Activated CD8-positive, alpha-beta T cell treated with anti-CD3 and anti-CD28 coated beads, Interleukin-2, amount 10 ng/mL, durations not matched to agents 7 days and 5 days (primary cell): ENCODE measurements at regions of chr1 and their contacts with region 1.

Region 1: GRCh38 chr1:116485071-116485735 is 85.6 kb downstream of the CD58 start:
- DNase-seq: peak; percentile 91
- ATAC-seq: peak; percentile 96
- H3K4me3 Mint-ChIP-seq: no peak overlapping the region
- H3K27ac Mint-ChIP-seq: no peak overlapping the region
- H3K4me1 Mint-ChIP-seq: peaks cover 4% of the 10 kb centered on the region
- H3K27me3 Mint-ChIP-seq: peaks cover 7% of the 10 kb centered on the region

Region 2: DNA sequence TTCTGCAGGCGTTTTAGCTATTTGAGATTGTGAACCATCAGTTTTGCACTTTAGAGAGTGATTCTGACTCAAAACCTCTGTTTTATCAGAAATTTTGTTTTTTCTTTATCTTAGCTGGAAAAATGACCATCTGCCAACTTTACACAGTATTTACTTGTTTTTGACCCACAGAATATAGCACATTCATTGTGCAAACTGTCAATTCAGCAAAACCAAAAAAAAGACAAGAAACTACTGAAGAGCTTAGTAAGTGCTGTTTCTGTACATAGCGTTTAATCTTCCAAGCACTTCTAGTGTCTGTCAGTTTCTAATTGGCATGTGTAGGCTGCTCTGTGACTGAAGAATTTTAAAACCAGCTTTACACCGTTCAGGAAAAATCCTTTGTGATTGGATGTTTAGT is 919.4 kb before region 1 on chr1:
- CTCF ChIA-PET with region 1: no interaction called
- POLR2A ChIA-PET with region 1: no interaction called
- DNase-seq: no peak
- ATAC-seq: no peak
- H3K4me3 Mint-ChIP-seq: no peak overlapping the region
- H3K27ac Mint-ChIP-seq: no peak overlapping the region
- H3K4me1 Mint-ChIP-seq: no peaks in the 10 kb centered on the region
- H3K27me3 Mint-ChIP-seq: peaks cover 14% of the 10 kb centered on the region

Region 3: GRCh38 chr1:116151739-116152576 is 333.2 kb before region 1 on chr1:
- CTCF ChIA-PET with region 1: interaction called, 429 read pairs
- POLR2A ChIA-PET with region 1: no interaction called
- DNase-seq: peak; percentile 77
- ATAC-seq: peak; percentile 97
- H3K4me3 Mint-ChIP-seq: peak overlapping the region; percentile 60
- H3K27ac Mint-ChIP-seq: peak overlapping the region; percentile 70
- H3K4me1 Mint-ChIP-seq: peaks cover 19% of the 10 kb centered on the region
- H3K27me3 Mint-ChIP-seq: peaks cover 19% of the 10 kb centered on the region

Region 4: GRCh38 chr1:116360429-116361173 is 124.6 kb before region 1 on chr1:
- CTCF ChIA-PET with region 1: interaction called, 28 read pairs
- POLR2A ChIA-PET with region 1: interaction called, 3 read pairs
- DNase-seq: no peak
- ATAC-seq: no peak
- H3K4me3 Mint-ChIP-seq: no peak overlapping the region
- H3K27ac Mint-ChIP-seq: no peak overlapping the region
- H3K4me1 Mint-ChIP-seq: peaks cover 4% of the 10 kb centered on the region
- H3K27me3 Mint-ChIP-seq: peaks cover 12% of the 10 kb centered on the region

Region 5: DNA sequence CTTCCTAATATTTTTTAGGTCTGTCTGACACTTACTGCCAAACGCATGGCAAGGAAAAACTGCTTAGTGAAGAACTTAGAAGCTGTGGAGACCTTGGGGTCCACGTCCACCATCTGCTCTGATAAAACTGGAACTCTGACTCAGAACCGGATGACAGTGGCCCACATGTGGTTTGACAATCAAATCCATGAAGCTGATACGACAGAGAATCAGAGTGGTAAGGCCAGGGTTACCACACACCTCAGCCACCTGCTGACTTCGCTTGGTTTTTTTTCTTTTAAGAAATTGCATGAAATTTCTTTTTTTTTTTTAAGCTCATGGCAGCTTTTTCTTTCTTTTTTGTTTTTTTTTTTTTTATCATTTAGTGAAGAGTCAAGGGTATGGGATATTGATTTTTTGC is 95.0 kb before region 1 on chr1:
- CTCF ChIA-PET with region 1: interaction called, 10 read pairs
- POLR2A ChIA-PET with region 1: no interaction called
- DNase-seq: peak; percentile 64
- ATAC-seq: peak; percentile 85
- H3K4me3 Mint-ChIP-seq: no peak overlapping the region
- H3K27ac Mint-ChIP-seq: peak overlapping the region; percentile 50
- H3K4me1 Mint-ChIP-seq: peaks cover 54% of the 10 kb centered on the region
- H3K27me3 Mint-ChIP-seq: no peaks in the 10 kb centered on the region

Region 6: GRCh38 chr1:116433275-116434257 is 51.6 kb before region 1 on chr1:
- CTCF ChIA-PET with region 1: interaction called, 12 read pairs
- POLR2A ChIA-PET with region 1: no interaction called
- DNase-seq: peak; percentile 20
- ATAC-seq: no peak
- H3K4me3 Mint-ChIP-seq: no peak overlapping the region
- H3K27ac Mint-ChIP-seq: no peak overlapping the region
- H3K4me1 Mint-ChIP-seq: no peaks in the 10 kb centered on the region
- H3K27me3 Mint-ChIP-seq: peaks cover 26% of the 10 kb centered on the region

Region 7: GRCh38 chr1:116498789-116499628 is 13.8 kb after region 1 on chr1:
- CTCF ChIA-PET with region 1: interaction called, 215 read pairs
- POLR2A ChIA-PET with region 1: no interaction called
- DNase-seq: peak; percentile 69
- ATAC-seq: peak; percentile 71
- H3K4me3 Mint-ChIP-seq: no peak overlapping the region
- H3K27ac Mint-ChIP-seq: no peak overlapping the region
- H3K4me1 Mint-ChIP-seq: peaks cover 52% of the 10 kb centered on the region
- H3K27me3 Mint-ChIP-seq: no peaks in the 10 kb centered on the region